ENCODE measurements at regions of chr18 and their contacts with region 1.

Region 1: DNA sequence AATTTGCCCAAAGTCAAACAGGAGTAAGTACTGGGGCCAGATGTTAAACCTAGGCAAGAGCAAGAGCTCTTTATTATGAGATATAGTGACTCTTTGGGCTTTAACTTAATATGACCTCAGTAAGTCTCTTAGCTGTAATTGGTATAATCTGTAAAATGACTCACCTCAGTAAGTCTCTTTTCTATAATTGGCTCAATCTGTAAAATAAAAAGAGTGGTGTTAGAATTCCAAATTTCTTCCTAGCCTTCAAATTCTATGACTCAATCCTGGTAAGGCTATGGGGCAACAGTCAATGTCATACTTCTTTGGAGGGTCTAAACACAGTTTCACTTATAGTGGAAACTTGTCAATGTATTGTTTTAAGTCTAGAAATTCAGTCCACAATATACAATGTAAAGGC is 1608.9 kb upstream of the PIK3C3 start:
- DNase-seq: no peak
- H3K4me3 ChIP-seq: no peak overlapping the region
- H3K27ac ChIP-seq: no peak overlapping the region
- H3K4me1 ChIP-seq: no peaks in the 10 kb centered on the region
- H3K27me3 ChIP-seq: no peaks in the 10 kb centered on the region
- CTCF ChIP-seq: no peak
- EP300 ChIP-seq: no peak
- POLR2A ChIP-seq: no peak

Region 2: DNA sequence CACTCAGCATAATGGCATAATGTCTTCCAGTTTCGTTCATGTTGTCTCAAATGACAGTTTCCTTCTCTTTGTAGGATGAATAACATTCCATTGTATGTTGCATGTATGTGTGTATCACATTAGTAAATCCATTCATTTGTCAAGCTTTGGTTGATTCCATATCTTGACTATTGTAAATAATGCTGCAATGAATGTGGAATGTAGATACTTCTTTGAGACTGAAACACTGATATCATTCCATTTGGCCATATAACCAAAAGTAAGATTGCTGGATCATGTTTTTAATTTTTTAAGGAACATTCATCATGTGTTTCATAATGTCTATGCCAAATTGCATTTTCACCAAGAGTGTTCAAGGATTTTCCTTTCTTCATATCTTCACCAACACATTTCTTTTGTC is 102.5 kb before region 1 on chr18:
- in situ Hi-C with region 1: no loop called
- intact Hi-C with region 1: no loop called
- DNase-seq: no peak
- H3K4me3 ChIP-seq: no peak overlapping the region
- H3K27ac ChIP-seq: no peak overlapping the region
- H3K4me1 ChIP-seq: no peaks in the 10 kb centered on the region
- H3K27me3 ChIP-seq: no peaks in the 10 kb centered on the region
- CTCF ChIP-seq: no peak
- EP300 ChIP-seq: no peak
- POLR2A ChIP-seq: no peak

Region 3: GRCh38 chr18:40437517-40437916 is 91.4 kb after region 1 on chr18:
- in situ Hi-C with region 1: loop called in 1 of 4 experiments (anchors 25 kb)
- intact Hi-C with region 1: no loop called
- DNase-seq: no peak
- H3K4me3 ChIP-seq: no peak overlapping the region
- H3K27ac ChIP-seq: no peak overlapping the region
- H3K4me1 ChIP-seq: no peaks in the 10 kb centered on the region
- H3K27me3 ChIP-seq: no peaks in the 10 kb centered on the region
- CTCF ChIP-seq: no peak
- EP300 ChIP-seq: no peak
- POLR2A ChIP-seq: no peak